Activated CD8-positive, alpha-beta memory T cell treated with anti-CD3 and anti-CD28 coated beads, Interleukin-2, amount 10 ng/mL, durations not matched to agents 7 days and 5 days (primary cell): ENCODE measurements at regions of chr20 and their contacts with region 1.

Region 1: DNA sequence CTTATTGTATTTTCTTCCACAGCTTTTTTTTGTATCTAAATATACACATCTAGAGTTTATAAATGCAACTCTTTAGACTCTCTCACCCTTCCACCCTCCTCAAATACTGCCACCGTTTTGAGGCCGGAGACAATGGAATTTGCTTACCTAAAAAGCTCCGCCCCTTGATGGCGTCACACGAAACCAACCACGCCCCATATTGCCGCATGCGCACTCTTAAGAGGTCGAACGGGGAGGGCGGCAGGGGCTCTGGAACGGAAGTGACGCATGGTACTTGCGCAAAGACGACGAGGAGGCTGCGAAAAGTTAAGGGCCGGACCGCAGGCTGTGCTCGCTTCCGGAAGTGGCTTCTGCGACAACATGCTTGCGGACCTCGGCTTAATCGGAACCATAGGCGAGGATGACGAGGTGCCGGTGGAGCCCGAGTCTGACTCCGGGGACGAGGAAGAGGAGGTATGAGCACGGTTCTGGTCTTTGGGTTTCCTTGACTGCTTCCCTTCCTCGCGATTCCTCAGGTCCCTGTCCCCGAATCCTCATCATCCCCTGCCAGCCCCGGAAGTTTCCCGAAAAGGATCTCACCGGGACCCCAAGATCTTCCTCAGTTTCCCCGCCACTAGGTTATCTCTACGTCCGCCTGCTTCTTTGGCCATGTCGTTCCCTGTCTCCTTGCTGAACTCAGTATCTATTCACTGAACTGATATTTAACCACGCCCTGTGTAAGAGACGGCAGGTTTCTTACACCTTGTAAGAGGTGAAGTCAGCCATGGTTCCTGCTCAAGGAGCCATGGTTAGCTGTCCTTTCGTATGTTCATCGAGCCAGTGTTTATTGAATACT is at the start of gene DDX27:
- DNase-seq: peak; percentile 99
- ATAC-seq: peak; percentile 94
- H3K4me3 Mint-ChIP-seq: peak within 1 kb of the TSS; percentile 89
- H3K27ac Mint-ChIP-seq: peak within 1 kb of the TSS; percentile 93
- H3K4me1 Mint-ChIP-seq: peaks cover 26% of the 10 kb centered on the region
- H3K27me3 Mint-ChIP-seq: no peaks in the 10 kb centered on the region
- total RNA-seq, gene DDX27: 40.5 to 52.7 TPM

Region 2: DNA sequence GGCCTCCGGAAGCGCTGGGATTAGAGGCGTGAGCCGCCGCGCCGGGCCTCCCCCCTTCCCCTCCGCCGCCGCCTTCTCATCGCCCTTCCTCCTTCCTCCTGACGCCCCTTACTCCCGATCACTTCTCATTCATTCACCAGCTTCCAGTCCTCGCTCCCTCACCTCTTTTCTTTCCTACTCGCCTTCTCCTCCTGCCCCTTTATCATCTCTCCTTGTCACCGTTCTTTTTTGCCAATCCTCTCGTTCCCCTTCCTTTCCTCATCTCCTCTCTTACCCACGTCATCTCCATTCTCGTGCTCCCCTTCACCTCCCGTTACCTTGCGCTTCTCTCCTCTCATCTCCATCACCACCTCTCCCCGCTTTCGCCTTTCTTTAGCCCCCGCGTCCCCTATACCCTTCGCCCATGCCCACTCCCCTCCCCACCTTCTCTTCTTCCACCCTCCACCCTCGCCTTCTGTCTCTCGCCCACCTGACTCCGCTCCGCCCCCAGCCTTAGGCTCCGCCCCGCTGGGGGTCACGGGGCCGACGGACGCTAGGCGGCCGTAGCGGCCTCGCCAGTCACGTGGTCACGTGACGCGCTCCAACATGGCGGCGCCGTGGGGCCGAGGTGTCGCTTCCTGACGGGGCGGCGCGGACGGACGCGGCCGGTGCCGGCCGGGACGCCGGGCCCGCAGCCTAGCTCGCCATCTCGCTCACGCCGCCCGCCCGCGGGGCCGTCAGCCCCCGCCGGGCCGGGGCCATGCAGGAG is 298.0 kb before region 1 on chr20 and contains the start of gene ARFGEF2:
- CTCF ChIA-PET with region 1: no interaction called
- DNase-seq: peak; percentile 95
- ATAC-seq: peak; percentile 96
- H3K4me3 Mint-ChIP-seq: peak within 1 kb of the TSS; percentile 90
- H3K27ac Mint-ChIP-seq: peak within 1 kb of the TSS; percentile 92
- H3K4me1 Mint-ChIP-seq: peaks cover 37% of the 10 kb centered on the region
- H3K27me3 Mint-ChIP-seq: peaks cover 8% of the 10 kb centered on the region
- total RNA-seq, gene ARFGEF2: 19.0 to 23.7 TPM

Region 3: DNA sequence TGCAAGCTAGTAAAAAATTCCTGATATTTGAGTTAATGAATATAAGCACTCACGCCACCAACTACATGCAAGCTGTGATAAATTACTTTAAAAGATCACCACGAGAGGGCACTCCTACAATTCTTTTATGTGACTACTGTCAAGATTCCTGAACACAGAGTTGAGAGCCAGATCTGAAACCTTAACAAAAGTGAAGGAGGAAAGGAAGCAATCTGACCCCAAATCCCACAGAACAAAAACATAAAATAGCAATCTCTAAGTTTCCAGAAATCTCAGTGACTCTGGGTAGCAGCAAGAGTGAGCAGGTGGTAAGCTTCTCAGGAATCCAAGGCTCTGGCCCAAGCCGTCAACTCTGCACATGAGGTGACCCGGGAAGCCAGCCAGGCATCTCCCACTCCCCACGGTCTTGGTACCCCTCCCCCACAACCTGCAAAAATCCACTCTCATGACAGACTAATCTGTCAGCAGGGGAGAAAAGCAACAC is 86.3 kb before region 1 on chr20:
- CTCF ChIA-PET with region 1: interaction called, 161 read pairs
- DNase-seq: no peak
- ATAC-seq: peak; percentile 58
- H3K4me3 Mint-ChIP-seq: no peak overlapping the region
- H3K27ac Mint-ChIP-seq: no peak overlapping the region
- H3K4me1 Mint-ChIP-seq: peaks cover 3% of the 10 kb centered on the region
- H3K27me3 Mint-ChIP-seq: no peaks in the 10 kb centered on the region

Region 4: DNA sequence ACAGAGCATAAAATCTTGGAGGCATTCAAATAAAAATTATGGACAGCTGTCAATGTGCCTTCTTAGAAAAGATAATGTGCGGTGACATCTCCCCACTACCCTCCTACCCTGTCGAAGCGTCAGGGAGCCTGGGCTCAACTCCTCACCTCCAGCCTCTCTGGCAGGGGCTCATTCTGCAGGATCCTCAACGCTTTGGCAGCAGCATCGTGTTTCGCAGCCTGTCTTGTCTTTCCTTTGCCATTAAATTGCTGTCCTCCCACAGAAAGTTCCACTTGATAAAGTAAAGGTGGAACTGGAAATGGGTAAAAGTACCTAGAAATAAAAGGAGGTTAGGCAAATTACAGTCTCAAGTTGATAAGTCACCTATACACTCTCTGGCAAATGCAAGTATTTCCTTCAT is 67.9 kb before region 1 on chr20:
- CTCF ChIA-PET with region 1: interaction called, 10 read pairs
- DNase-seq: no peak
- ATAC-seq: no peak
- H3K4me3 Mint-ChIP-seq: no peak overlapping the region
- H3K27ac Mint-ChIP-seq: no peak overlapping the region
- H3K4me1 Mint-ChIP-seq: peaks cover 10% of the 10 kb centered on the region
- H3K27me3 Mint-ChIP-seq: no peaks in the 10 kb centered on the region

Region 5: GRCh38 chr20:49171909-49172308 is 47.4 kb before region 1 on chr20:
- CTCF ChIA-PET with region 1: interaction called, 27 read pairs
- DNase-seq: no peak
- ATAC-seq: no peak
- H3K4me3 Mint-ChIP-seq: no peak overlapping the region
- H3K27ac Mint-ChIP-seq: no peak overlapping the region
- H3K4me1 Mint-ChIP-seq: peaks cover 46% of the 10 kb centered on the region
- H3K27me3 Mint-ChIP-seq: no peaks in the 10 kb centered on the region

Region 6: DNA sequence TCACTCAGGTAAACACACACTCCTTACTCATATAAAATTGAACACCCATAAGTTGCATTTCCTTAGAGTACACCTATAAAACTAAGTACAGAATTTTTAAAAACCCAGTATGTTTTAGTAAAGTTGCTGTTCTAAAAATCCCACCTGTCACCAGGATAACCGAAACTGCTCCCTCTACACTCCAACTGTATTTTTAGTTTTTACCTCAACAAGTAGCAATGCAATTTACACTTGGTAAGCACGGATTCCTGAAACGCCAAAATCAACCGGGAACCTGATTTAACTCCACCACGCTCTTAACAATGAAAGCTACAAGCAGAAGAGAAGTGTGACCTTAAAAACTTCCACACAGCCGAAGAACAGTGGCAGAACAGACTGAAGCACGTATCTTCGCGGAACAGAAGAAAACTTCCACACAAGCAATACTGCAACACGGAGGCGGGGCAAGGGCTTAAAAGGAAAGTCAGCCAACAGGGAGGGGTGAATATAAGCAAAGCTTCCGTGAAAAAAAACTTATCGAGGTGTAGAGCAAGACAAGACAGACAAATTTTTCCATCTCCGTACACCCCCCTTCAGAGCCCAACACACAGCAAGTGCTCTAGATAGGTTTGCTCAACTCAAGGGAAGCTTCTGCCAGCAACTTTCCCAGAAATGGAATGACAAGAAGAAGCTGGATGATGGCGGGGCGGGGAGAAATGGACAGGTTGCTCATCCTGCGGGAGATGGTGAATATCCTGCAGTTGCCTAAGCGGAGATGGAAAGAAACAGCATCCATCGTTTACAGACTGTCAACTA is 32.6 kb before region 1 on chr20:
- CTCF ChIA-PET with region 1: interaction called, 42 read pairs
- DNase-seq: peak; percentile 78
- ATAC-seq: peak; percentile 34
- H3K4me3 Mint-ChIP-seq: peak overlapping the region; percentile 91
- H3K27ac Mint-ChIP-seq: peak overlapping the region; percentile 83
- H3K4me1 Mint-ChIP-seq: peaks cover 47% of the 10 kb centered on the region
- H3K27me3 Mint-ChIP-seq: peaks cover 5% of the 10 kb centered on the region

Region 7: DNA sequence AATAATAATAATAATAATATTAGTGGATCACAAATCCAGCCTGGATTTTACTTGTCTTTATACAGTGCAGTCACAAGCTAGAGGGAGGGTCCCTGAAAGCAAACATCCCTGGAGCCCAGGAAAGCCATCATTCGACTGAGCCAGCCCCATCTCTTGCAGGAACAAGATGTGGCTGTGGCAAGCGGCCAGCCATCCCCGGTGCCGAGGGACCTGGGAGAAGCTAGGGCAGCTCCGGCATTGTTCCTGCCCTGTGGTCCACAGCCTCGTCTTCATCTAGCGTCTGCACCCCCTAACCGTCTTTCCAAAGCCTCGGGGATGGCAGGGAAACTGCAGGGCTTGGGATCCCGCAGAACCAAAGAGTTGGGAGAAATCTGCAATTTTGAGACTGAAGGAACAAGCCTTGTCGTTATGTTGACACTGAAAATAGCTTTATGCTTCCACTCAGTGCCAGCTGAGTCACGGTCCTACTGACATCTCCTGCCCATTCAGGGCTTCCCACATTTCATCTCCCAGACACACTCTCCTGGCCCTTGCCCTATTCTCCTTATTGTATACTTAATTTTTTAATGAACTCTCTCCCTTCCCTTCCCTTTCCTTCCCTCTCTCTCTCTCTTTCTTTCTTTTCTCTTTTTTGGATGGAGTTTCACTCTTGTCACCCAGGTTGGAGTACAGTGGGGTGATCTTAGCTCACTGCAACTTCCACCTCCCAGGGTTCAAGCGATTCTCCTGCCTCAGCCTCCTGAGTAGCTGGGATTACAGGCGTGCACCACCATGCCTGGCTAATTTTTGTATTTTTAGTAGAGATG is 121.1 kb after region 1 on chr20:
- CTCF ChIA-PET with region 1: no interaction called
- DNase-seq: no peak
- ATAC-seq: no peak
- H3K4me3 Mint-ChIP-seq: no peak overlapping the region
- H3K27ac Mint-ChIP-seq: no peak overlapping the region
- H3K4me1 Mint-ChIP-seq: no peaks in the 10 kb centered on the region
- H3K27me3 Mint-ChIP-seq: peaks cover 15% of the 10 kb centered on the region